B cell (primary cell): ENCODE measurements at regions of chr10 and their contacts with region 1.

Region 1: GRCh38 chr10:120409816-120410215 is 47.2 kb upstream of the PLPP4 start:
- DNase-seq: no peak
- ATAC-seq: no peak
- H3K4me3 ChIP-seq: no peak overlapping the region
- H3K4me3 Mint-ChIP-seq: no peak overlapping the region
- H3K27ac ChIP-seq: no peak overlapping the region
- H3K27ac Mint-ChIP-seq: no peak overlapping the region
- H3K4me1 ChIP-seq: no peaks in the 10 kb centered on the region
- H3K4me1 Mint-ChIP-seq: no peaks in the 10 kb centered on the region
- H3K27me3 ChIP-seq: no peaks in the 10 kb centered on the region
- H3K27me3 Mint-ChIP-seq: peaks cover 14% of the 10 kb centered on the region
- CTCF ChIP-seq: no peak

Region 2: DNA sequence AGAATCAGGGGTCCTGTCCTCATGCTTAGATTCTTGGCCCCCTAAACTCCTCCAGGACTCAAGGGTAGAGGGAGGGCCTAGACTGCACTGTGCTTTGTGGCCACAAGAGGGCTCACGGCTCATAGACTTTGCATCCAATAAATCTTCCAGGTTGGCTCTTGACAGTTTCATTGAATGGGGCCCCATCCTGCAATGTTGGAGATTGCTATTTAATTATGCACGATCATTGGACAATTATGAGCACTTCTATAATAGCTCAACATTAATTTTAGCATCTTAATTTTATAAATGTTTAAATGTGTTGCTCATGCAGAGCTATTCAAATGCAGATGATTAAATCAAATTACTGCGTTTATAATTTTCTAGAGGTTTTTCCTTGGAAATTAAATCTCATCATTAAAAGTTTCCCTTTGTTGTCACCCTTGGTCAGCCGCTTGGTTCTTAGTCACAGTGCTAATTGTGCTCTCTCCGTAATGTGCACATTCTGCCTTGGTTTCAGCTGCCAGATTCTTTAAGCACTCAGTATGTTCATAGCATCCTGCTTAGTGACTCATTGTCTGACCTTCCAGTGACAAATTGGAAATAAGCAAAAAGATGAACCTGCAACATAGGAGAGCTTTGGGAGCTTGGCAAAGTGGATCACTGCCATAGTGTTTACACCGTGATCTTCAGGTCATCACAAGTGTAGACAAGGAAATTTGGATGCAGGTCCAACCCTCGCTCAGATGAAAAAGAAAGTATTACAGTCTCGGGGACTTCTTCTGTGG is 13.8 kb after region 1 on chr10:
- CTCF ChIA-PET with region 1: interaction called, 11 read pairs
- POLR2A ChIA-PET with region 1: no interaction called
- intact Hi-C with region 1: no loop called
- DNase-seq: peak; percentile 20
- ATAC-seq: peak; percentile 36
- H3K4me3 ChIP-seq: no peak overlapping the region
- H3K4me3 Mint-ChIP-seq: no peak overlapping the region
- H3K27ac ChIP-seq: no peak overlapping the region
- H3K27ac Mint-ChIP-seq: no peak overlapping the region
- H3K4me1 ChIP-seq: no peaks in the 10 kb centered on the region
- H3K4me1 Mint-ChIP-seq: no peaks in the 10 kb centered on the region
- H3K27me3 ChIP-seq: peaks cover 0 to 2% (median 0%) of the 10 kb centered on the region in 4 experiments
- H3K27me3 Mint-ChIP-seq: peaks cover 11% of the 10 kb centered on the region
- CTCF ChIP-seq: peak; percentile 81